ENCODE measurements at regions of chr17 and their contacts with region 1.

Region 1: GRCh38 chr17:75845049-75845860 is 1.1 kb upstream of the UNC13D start:
- DNase-seq: peak; percentile 86
- ATAC-seq: peak; percentile 87
- H3K4me3 ChIP-seq: peak overlapping the region in 4 of 5 experiments; percentile 72 to 86 (median 78)
- H3K4me3 Mint-ChIP-seq: peak overlapping the region; percentile 94
- H3K27ac ChIP-seq: peak overlapping the region; percentile 92 to 93
- H3K27ac Mint-ChIP-seq: peak overlapping the region; percentile 97
- H3K4me1 ChIP-seq: peaks cover 17 to 43% of the 10 kb centered on the region in 2 donors
- H3K4me1 Mint-ChIP-seq: peaks cover 26% of the 10 kb centered on the region
- H3K27me3 ChIP-seq: no peaks in the 10 kb centered on the region
- H3K27me3 Mint-ChIP-seq: no peaks in the 10 kb centered on the region
- CTCF ChIP-seq: peak; percentile 83

Region 2: GRCh38 chr17:75764711-75765421 is 80.4 kb before region 1 on chr17 and contains the start of gene GALK1:
- CTCF ChIA-PET with region 1: interaction called, 36 read pairs
- POLR2A ChIA-PET with region 1: interaction called, 5 read pairs
- intact Hi-C with region 1: no loop called
- DNase-seq: peak; percentile 88
- ATAC-seq: peak; percentile 91
- H3K4me3 ChIP-seq: peak within 1 kb of the TSS; percentile 38 to 88 (median 83)
- H3K4me3 Mint-ChIP-seq: peak within 1 kb of the TSS; percentile 85
- H3K27ac ChIP-seq: peak within 1 kb of the TSS; percentile 15 to 72
- H3K27ac Mint-ChIP-seq: peak within 1 kb of the TSS; percentile 83
- H3K4me1 ChIP-seq: peaks cover 14 to 23% of the 10 kb centered on the region in 2 donors
- H3K4me1 Mint-ChIP-seq: peaks cover 18% of the 10 kb centered on the region
- H3K27me3 ChIP-seq: no peaks in the 10 kb centered on the region
- H3K27me3 Mint-ChIP-seq: no peaks in the 10 kb centered on the region
- CTCF ChIP-seq: peak; percentile 78
- total RNA-seq, gene GALK1: 29.8 and 33.9 TPM in 2 replicates

Region 3: DNA sequence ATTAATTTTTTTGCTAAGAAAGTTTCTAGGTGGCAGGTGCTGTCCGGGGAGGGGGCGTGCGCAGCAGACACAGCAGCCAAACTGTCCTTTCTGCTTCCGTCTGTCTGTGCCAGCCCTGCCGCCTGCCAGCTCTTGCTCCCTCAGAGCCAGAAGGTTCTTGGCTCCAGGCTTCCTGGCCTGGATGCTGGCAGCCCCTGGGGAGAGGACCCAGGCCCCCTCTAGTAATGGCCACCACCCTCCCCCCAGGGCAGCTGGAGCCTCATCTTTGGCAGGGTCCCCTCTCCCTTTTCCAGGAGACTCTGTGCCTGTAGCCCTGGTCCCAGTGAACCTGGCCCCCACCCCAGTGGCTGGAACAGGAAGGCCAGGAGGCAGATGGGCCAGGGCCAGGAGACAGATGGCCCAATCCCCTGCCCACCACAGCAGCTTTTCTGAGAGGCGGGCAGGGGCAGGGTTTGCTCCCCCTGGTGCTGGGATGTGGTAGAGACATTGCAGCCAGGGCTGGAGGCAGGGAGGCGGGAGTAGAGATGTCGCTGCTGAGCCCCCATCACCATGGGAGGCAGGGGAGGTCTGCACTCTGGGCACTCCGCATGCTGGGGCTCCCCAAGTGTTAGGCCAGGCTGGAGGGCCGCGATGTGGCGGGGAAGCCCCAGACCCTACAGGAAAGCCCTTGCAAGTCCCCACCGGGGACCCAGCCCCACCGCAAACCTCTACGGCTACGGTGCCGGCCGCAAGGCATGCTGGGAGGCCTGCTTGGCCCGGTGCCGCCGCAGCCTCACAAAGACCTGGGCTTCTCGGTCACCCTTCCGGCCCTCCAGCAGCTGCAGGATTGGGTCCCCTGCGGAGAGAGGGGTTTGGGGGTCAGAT is 17.8 kb before region 1 on chr17:
- CTCF ChIA-PET with region 1: interaction called, 7 read pairs
- POLR2A ChIA-PET with region 1: interaction called, 10 read pairs
- intact Hi-C with region 1: no loop called
- DNase-seq: peak; percentile 79
- ATAC-seq: peak; percentile 83
- H3K4me3 ChIP-seq: peak overlapping the region in 4 of 5 experiments; percentile 27 to 47 (median 36)
- H3K4me3 Mint-ChIP-seq: peak overlapping the region; percentile 82
- H3K27ac ChIP-seq: peak overlapping the region; percentile 42 to 54
- H3K27ac Mint-ChIP-seq: peak overlapping the region; percentile 86
- H3K4me1 ChIP-seq: peaks cover 8 to 18% of the 10 kb centered on the region in 2 donors
- H3K4me1 Mint-ChIP-seq: peaks cover 18% of the 10 kb centered on the region
- H3K27me3 ChIP-seq: no peaks in the 10 kb centered on the region
- H3K27me3 Mint-ChIP-seq: no peaks in the 10 kb centered on the region
- CTCF ChIP-seq: peak; percentile 80

Region 4: GRCh38 chr17:75877752-75878173 is 32.5 kb after region 1 on chr17:
- CTCF ChIA-PET with region 1: interaction called, 10 read pairs
- POLR2A ChIA-PET with region 1: interaction called, 4 read pairs
- intact Hi-C with region 1: loop called (anchors 5 kb)
- DNase-seq: peak; percentile 87
- ATAC-seq: peak; percentile 77
- H3K4me3 ChIP-seq: peak overlapping the region in 4 of 5 experiments; percentile 46 to 69 (median 52)
- H3K4me3 Mint-ChIP-seq: peak overlapping the region; percentile 90
- H3K27ac ChIP-seq: peak overlapping the region; percentile 44 to 55
- H3K27ac Mint-ChIP-seq: peak overlapping the region; percentile 91
- H3K4me1 ChIP-seq: peaks cover 30 to 39% of the 10 kb centered on the region in 2 donors
- H3K4me1 Mint-ChIP-seq: peaks cover 35% of the 10 kb centered on the region
- H3K27me3 ChIP-seq: peaks cover 0 to 7% (median 1%) of the 10 kb centered on the region in 4 experiments
- H3K27me3 Mint-ChIP-seq: peaks cover 4% of the 10 kb centered on the region
- CTCF ChIP-seq: peak; percentile 73

Region 5: GRCh38 chr17:75904749-75905521 is 59.7 kb after region 1 on chr17 and contains the start of gene MRPL38:
- CTCF ChIA-PET with region 1: no interaction called
- POLR2A ChIA-PET with region 1: interaction called, 10 read pairs
- intact Hi-C with region 1: no loop called
- DNase-seq: peak; percentile 97
- ATAC-seq: peak; percentile 96
- H3K4me3 ChIP-seq: peak within 1 kb of the TSS; percentile 40 to 83 (median 79)
- H3K4me3 Mint-ChIP-seq: peak within 1 kb of the TSS; percentile 91
- H3K27ac ChIP-seq: peak within 1 kb of the TSS; percentile 79 to 83
- H3K27ac Mint-ChIP-seq: peak within 1 kb of the TSS; percentile 90
- H3K4me1 ChIP-seq: peaks cover 3 to 17% of the 10 kb centered on the region in 2 donors
- H3K4me1 Mint-ChIP-seq: peaks cover 8% of the 10 kb centered on the region
- H3K27me3 ChIP-seq: no peaks in the 10 kb centered on the region
- H3K27me3 Mint-ChIP-seq: no peaks in the 10 kb centered on the region
- CTCF ChIP-seq: peak; percentile 99
- total RNA-seq, gene MRPL38: 127 and 139 TPM in 2 replicates

Region 6: GRCh38 chr17:76079956-76080767 is 234.9 kb after region 1 on chr17:
- CTCF ChIA-PET with region 1: no interaction called
- POLR2A ChIA-PET with region 1: no interaction called
- intact Hi-C with region 1: no loop called
- DNase-seq: peak; percentile 43
- ATAC-seq: peak; percentile 13
- H3K4me3 ChIP-seq: no peak overlapping the region
- H3K4me3 Mint-ChIP-seq: no peak overlapping the region
- H3K27ac ChIP-seq: no peak overlapping the region
- H3K27ac Mint-ChIP-seq: no peak overlapping the region
- H3K4me1 ChIP-seq: peaks cover 40% of the 10 kb centered on the region in 2 donors
- H3K4me1 Mint-ChIP-seq: peaks cover 36% of the 10 kb centered on the region
- H3K27me3 ChIP-seq: peaks cover 0 to 46% (median 38%) of the 10 kb centered on the region in 4 experiments
- H3K27me3 Mint-ChIP-seq: peaks cover 23% of the 10 kb centered on the region
- CTCF ChIP-seq: peak; percentile 12

Measured in B cell (primary cell).